ENCODE measurements at regions of chr13 and their contacts with region 1.

Region 1: GRCh38 chr13:42814868-42815267 is 33.5 kb downstream of the FAM216B start:
- DNase-seq: no peak
- ATAC-seq: no peak
- H3K4me3 ChIP-seq: no peak overlapping the region
- H3K27ac ChIP-seq: no peak overlapping the region
- H3K4me1 ChIP-seq: peaks cover 0 to 5% (median 0%) of the 10 kb centered on the region in 9 donors
- H3K27me3 ChIP-seq: no peaks in the 10 kb centered on the region
- CTCF ChIP-seq: no peak

Region 2: DNA sequence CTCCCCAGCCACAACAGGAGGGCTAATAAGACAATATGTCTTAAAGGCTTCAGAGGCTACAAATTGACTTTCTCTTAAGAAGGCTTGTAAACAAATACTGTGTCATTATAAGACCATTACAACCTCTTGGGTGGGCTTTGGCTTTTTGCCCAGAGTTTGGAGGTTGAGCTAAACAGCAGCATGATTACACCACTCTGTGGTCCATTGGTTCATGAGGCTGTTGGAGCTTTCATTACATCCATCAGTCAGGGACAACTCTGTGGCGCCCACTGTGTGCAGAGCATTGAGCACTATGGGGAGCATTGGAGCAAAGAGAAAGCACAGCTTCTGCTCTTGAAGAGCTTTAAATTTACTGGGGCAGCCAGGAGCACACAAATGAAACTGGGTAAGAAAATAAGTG is 165.0 kb before region 1 on chr13:
- intact Hi-C with region 1: loop called in 2 of 10 experiments (anchors 10 kb)
- DNase-seq: no peak
- ATAC-seq: no peak
- H3K4me3 ChIP-seq: no peak overlapping the region
- H3K27ac ChIP-seq: no peak overlapping the region
- H3K4me1 ChIP-seq: no peaks in the 10 kb centered on the region
- H3K27me3 ChIP-seq: peaks cover 0 to 21% (median under 1%) of the 10 kb centered on the region in 7 donors
- CTCF ChIP-seq: no peak

Region 3: GRCh38 chr13:42660333-42660965 is 154.4 kb before region 1 on chr13:
- intact Hi-C with region 1: loop called in 4 of 10 experiments (anchors 10 kb)
- DNase-seq: no peak
- ATAC-seq: no peak
- H3K4me3 ChIP-seq: no peak overlapping the region
- H3K27ac ChIP-seq: no peak overlapping the region
- H3K4me1 ChIP-seq: no peaks in the 10 kb centered on the region
- H3K27me3 ChIP-seq: peaks cover 0 to 23% (median 0%) of the 10 kb centered on the region in 7 donors
- CTCF ChIP-seq: peak in 7 of 9 donors; percentile 18 to 56 (median 42)

Region 4: DNA sequence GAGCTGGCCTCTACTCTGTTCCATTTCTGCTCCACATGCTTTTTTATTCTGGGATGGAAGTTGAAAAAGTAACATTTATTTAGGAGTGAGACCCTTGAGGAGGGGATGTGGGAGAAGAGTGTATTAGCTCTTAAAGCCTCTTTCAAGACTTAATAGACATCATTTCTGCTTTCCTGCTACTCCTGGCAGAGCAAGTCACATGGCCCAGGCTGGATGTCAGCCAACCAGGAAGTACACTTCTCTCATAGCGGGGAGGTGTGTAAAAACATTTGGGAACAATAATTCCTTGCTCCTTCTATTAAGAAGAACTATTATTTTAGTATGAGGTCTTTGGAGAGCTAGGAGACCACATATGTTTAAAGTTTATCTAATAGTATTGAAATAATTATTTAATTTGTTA is 74.1 kb before region 1 on chr13:
- intact Hi-C with region 1: no loop called
- DNase-seq: peak; percentile 23 to 36
- ATAC-seq: no peak
- H3K4me3 ChIP-seq: no peak overlapping the region
- H3K27ac ChIP-seq: no peak overlapping the region
- H3K4me1 ChIP-seq: peaks cover 0 to 10% (median 0%) of the 10 kb centered on the region in 9 donors
- H3K27me3 ChIP-seq: no peaks in the 10 kb centered on the region
- CTCF ChIP-seq: no peak

Region 5: DNA sequence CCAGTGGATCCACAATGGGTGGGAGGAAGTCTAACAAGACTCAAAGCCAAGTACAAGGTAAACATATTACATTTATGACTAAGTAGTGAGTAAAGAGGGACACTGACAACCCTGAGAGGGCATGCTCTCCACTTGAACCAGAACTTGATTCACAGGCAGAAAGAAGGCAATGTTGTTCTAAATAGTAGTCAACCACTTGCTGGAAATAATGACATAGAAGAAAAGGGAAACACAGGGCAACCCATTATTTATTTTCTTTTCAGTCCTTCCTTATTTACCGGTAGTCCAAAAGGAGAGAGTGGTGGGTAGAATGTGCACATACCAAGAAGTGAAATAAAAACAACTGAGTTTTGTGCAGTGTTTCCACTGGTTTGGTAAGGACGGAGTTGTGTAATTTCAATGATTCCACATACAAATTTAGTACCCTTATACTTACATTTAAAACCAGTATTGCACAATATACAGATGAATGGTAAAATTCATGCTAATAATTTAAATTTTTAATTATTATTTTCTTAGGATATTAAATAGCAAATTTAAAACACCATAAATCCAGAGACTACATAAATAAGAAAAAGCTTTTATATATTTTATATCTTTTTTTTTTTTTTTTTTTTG is 906.0 kb after region 1 on chr13:
- intact Hi-C with region 1: no loop called
- DNase-seq: no peak
- ATAC-seq: no peak
- H3K4me3 ChIP-seq: no peak overlapping the region
- H3K27ac ChIP-seq: no peak overlapping the region
- H3K4me1 ChIP-seq: peaks cover 0 to 3% (median 0%) of the 10 kb centered on the region in 9 donors
- H3K27me3 ChIP-seq: no peaks in the 10 kb centered on the region
- CTCF ChIP-seq: no peak